ENCODE measurements at regions of chr11 and their contacts with region 1.

Region 1: GRCh38 chr11:65779851-65780577 is 762 bp downstream of the AP5B1 start:
- DNase-seq: peak; percentile 65 to 81 (median 76)
- ATAC-seq: peak; percentile 62 to 74
- H3K4me3 Mint-ChIP-seq: peak overlapping the region; percentile 77 to 91 (median 83)
- H3K27ac Mint-ChIP-seq: peak overlapping the region in 9 of 10 donors; percentile 12 to 83 (median 68)
- H3K4me1 Mint-ChIP-seq: peaks cover 7 to 19% (median 17%) of the 10 kb centered on the region in 4 donors
- H3K27me3 Mint-ChIP-seq: peaks cover 0 to 7% (median 2%) of the 10 kb centered on the region in 5 donors

Region 2: DNA sequence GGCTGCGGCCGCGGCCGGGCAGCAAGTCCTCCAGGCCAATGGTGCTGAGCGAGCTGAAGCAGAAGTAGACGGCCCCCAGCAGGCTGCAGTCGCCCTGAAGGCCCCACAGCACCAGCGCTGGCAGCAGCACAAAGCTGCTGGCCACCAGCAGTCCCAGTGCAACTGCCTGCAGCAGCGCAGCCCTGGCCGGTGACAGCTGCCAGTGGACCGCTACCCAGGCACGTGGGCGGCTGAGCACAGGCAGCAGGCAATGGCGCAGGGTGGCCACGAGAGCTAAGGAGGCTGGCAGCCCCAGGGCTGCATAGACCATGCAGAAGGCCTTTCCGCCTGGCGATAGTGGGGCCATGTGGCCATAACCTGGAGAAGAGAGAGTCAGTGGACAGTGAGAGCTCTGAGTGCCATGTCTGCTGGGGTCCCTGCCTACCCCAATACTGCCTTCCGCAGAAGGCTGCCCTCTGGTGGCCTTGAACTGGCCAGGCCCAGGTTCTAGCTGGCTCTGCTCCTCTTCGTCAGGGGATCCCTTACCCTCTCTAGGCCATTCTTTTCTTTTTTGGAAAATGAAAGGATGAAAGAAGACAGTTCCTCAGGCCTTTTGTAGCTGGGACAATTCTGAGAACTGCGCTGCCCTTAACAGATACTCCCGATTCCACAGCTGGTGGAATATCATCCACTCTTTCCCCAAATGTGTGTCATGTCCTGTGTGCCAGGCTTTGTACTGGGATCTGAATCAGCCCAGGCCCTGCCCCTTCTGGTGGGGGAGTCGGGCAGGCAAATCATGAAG is 186.3 kb before region 1 on chr11:
- POLR2A ChIA-PET with region 1: no interaction called
- DNase-seq: peak in 8 of 10 donors; percentile 35 to 74 (median 54)
- ATAC-seq: peak; percentile 67 to 80
- H3K4me3 Mint-ChIP-seq: peak overlapping the region in 1 of 10 donors; percentile 15
- H3K27ac Mint-ChIP-seq: peak overlapping the region in 4 of 10 donors; percentile 9 to 75 (median 37)
- H3K4me1 Mint-ChIP-seq: peaks cover 13 to 34% (median 23%) of the 10 kb centered on the region in 4 donors
- H3K27me3 Mint-ChIP-seq: no peaks in the 10 kb centered on the region

Region 3: GRCh38 chr11:65806979-65807378 is 27.0 kb after region 1 on chr11:
- POLR2A ChIA-PET with region 1: no interaction called
- DNase-seq: no peak
- ATAC-seq: no peak
- H3K4me3 Mint-ChIP-seq: no peak overlapping the region
- H3K27ac Mint-ChIP-seq: no peak overlapping the region
- H3K4me1 Mint-ChIP-seq: peaks cover 0 to 7% (median 0%) of the 10 kb centered on the region in 4 donors
- H3K27me3 Mint-ChIP-seq: peaks cover 7 to 21% (median 10%) of the 10 kb centered on the region in 5 donors

Region 4: GRCh38 chr11:65817835-65818742 is 38.1 kb after region 1 on chr11:
- POLR2A ChIA-PET with region 1: interaction called, 24 read pairs
- DNase-seq: peak; percentile 83 to 99 (median 91)
- ATAC-seq: peak; percentile 87 to 88
- H3K4me3 Mint-ChIP-seq: peak overlapping the region; percentile 70 to 86 (median 82)
- H3K27ac Mint-ChIP-seq: peak overlapping the region; percentile 48 to 91 (median 84)
- H3K4me1 Mint-ChIP-seq: peaks cover 6 to 16% (median 14%) of the 10 kb centered on the region in 4 donors
- H3K27me3 Mint-ChIP-seq: peaks cover 0 to 2% (median 0%) of the 10 kb centered on the region in 5 donors

Region 5: DNA sequence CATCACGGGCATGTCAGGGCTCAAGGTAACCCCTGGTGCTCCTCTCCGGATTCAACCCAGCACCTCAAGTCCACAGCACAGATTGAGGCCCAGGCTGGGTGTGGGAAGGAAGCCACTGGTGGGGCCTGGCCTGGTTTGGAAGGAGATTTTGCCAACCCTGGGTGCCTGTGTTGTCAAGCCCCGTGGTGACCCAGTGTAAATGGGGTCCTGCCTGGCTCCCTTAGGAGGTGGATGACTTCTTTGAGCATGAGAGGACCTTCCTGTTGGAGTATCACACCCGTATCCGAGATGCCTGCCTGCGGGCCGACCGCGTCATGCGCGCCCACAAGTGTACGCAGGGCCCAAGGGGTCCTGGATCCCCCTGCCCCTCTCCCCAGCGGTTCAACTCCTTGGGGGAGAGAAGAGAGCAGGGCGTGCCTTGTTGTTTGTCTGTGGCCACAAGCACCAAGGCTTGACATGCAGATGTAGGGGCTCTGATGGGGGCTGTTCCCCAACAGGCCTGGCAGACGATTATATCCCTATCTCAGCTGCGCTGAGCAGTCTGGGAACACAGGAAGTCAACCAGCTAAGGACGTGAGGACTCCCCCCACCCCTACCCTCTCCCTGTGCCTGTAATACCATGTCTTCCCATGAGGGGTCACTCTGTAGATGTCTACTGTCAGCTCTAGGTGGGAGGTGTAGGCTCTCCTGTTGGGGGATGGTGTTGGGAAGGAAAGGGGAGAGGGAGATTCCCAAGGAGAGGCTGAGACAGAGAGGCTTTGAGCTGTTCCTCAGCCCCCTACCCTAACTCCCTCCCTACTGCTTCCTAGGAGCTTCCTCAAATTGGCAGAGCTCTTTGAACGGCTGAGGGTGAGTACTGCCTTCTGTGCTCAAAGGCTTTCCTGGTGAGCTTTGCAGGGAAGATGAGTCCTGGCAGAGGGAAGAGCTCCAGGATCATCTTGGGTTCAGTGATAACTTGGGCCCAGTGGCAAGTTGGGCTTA is 71.1 kb after region 1 on chr11:
- POLR2A ChIA-PET with region 1: no interaction called
- DNase-seq: no peak
- ATAC-seq: peak in 1 of 2 donors; percentile 15
- H3K4me3 Mint-ChIP-seq: no peak overlapping the region
- H3K27ac Mint-ChIP-seq: peak overlapping the region in 3 of 10 donors; percentile 36 to 65 (median 40)
- H3K4me1 Mint-ChIP-seq: peaks cover 6 to 38% (median 29%) of the 10 kb centered on the region in 4 donors
- H3K27me3 Mint-ChIP-seq: no peaks in the 10 kb centered on the region

Region 6: GRCh38 chr11:65981972-65982823 is 202.2 kb after region 1 on chr11:
- POLR2A ChIA-PET with region 1: no interaction called
- DNase-seq: no peak
- ATAC-seq: no peak
- H3K4me3 Mint-ChIP-seq: no peak overlapping the region
- H3K27ac Mint-ChIP-seq: peak overlapping the region in 2 of 10 donors; percentile 53 to 81
- H3K4me1 Mint-ChIP-seq: no peaks in the 10 kb centered on the region
- H3K27me3 Mint-ChIP-seq: no peaks in the 10 kb centered on the region